IMR-90 (cell line): ENCODE measurements at regions of chr3 and their contacts with region 1.

Region 1: GRCh38 chr3:158213459-158213858 is 103.6 kb downstream of the RSRC1 start:
- DNase-seq: no peak
- ATAC-seq: no peak
- H3K4me3 ChIP-seq: no peak overlapping the region
- H3K27ac ChIP-seq: no peak overlapping the region
- H3K4me1 ChIP-seq: no peaks in the 10 kb centered on the region
- H3K27me3 ChIP-seq: no peaks in the 10 kb centered on the region
- CTCF ChIP-seq: no peak
- POLR2A ChIP-seq: no peak
- RAD21 ChIP-seq: no peak

Region 2: DNA sequence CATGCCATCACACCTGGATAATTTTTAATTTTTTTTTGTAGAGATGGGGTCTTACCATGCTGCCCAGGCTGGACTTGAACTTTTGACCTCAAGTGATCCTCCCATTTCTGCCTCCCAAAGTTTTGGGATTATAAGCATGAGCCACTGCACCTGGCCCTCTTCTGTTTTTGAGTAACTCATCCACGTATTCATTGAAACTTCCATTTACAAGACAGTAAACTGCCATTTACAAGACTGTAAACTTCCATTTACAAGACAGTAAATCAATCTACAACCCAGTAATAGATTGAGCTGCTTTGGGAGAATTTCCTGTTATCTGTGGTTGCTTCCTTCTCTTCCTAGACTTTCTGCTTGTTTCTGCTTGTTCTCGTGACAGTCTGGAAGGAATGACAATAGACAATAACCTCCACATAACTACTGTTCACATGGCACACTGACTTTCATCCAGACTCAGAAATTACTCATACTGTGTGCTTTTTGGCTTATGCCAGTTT is 938.8 kb before region 1 on chr3:
- CTCF ChIA-PET with region 1: no interaction called
- POLR2A ChIA-PET with region 1: no interaction called
- dilution Hi-C with region 1: no loop called
- in situ Hi-C with region 1: no loop called
- intact Hi-C with region 1: no loop called
- DNase-seq: no peak
- ATAC-seq: no peak
- H3K4me3 ChIP-seq: no peak overlapping the region
- H3K27ac ChIP-seq: no peak overlapping the region
- H3K4me1 ChIP-seq: no peaks in the 10 kb centered on the region
- H3K27me3 ChIP-seq: no peaks in the 10 kb centered on the region
- CTCF ChIP-seq: no peak
- POLR2A ChIP-seq: no peak
- RAD21 ChIP-seq: no peak

Region 3: DNA sequence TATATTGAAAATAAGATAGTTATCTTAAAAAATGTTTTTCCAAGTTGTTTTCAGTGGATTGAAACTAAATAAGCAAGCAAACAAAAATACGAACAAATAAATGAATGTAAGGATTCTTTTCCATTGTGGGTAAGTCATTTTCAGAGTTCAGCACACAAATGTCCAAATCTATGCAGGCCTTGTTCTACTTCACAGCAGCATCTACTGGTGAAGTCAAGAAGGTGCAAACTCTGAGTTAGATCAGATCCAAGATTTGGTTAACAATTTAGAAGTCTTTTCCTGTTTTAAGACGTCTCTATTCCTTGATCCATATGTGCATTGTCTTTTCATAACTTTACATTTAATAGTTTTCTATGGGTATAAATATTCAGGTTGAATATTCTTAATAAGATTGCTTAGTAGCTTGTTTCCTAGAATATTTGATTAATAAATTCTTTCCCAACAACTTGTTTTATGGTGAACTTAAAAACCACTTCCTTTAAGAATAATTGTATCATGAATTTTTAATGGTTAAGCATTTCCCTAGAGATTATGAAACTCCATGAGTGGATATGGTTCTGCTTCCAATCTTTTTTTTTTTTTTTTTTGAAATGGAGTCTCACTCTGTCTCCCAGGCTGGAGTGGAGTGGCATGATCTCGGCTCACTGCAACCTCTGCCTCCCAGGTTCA is 766.3 kb before region 1 on chr3:
- CTCF ChIA-PET with region 1: no interaction called
- POLR2A ChIA-PET with region 1: no interaction called
- dilution Hi-C with region 1: no loop called
- in situ Hi-C with region 1: no loop called
- intact Hi-C with region 1: no loop called
- DNase-seq: peak; percentile 70
- ATAC-seq: peak; percentile 56; the same call in 1 of the 2 replicates
- H3K4me3 ChIP-seq: no peak overlapping the region
- H3K27ac ChIP-seq: no peak overlapping the region
- H3K4me1 ChIP-seq: peaks cover 10% of the 10 kb centered on the region
- H3K27me3 ChIP-seq: no peaks in the 10 kb centered on the region
- CTCF ChIP-seq: peak; percentile 68
- POLR2A ChIP-seq: no peak
- RAD21 ChIP-seq: peak; percentile 73

Region 4: DNA sequence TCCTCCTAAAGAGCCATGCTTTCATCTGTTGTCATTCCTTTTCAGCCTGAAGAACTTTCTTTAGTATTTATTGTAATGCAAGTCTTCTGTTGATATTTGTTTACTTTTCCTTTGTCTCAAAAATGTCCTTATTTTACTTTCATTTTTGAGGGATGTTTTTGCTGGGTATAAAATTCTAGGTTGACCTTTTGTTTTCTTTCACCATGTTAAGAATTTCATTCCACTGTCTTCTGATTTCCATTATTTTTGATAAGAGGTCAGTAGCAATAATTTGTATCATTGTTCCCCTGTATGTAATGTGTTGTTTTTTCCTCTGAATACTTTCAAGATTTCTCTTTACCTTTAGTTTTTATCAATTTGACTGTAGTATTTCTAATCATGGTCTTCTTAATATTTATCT is 12.5 kb before region 1 on chr3:
- CTCF ChIA-PET with region 1: no interaction called
- POLR2A ChIA-PET with region 1: no interaction called
- dilution Hi-C with region 1: no loop called
- in situ Hi-C with region 1: no loop called
- intact Hi-C with region 1: loop called (anchors 2 kb)
- DNase-seq: no peak
- ATAC-seq: no peak
- H3K4me3 ChIP-seq: no peak overlapping the region
- H3K27ac ChIP-seq: no peak overlapping the region
- H3K4me1 ChIP-seq: no peaks in the 10 kb centered on the region
- H3K27me3 ChIP-seq: no peaks in the 10 kb centered on the region
- CTCF ChIP-seq: no peak
- POLR2A ChIP-seq: no peak
- RAD21 ChIP-seq: no peak